ENCODE measurements at regions of chr6 and their contacts with region 1.

Region 1: DNA sequence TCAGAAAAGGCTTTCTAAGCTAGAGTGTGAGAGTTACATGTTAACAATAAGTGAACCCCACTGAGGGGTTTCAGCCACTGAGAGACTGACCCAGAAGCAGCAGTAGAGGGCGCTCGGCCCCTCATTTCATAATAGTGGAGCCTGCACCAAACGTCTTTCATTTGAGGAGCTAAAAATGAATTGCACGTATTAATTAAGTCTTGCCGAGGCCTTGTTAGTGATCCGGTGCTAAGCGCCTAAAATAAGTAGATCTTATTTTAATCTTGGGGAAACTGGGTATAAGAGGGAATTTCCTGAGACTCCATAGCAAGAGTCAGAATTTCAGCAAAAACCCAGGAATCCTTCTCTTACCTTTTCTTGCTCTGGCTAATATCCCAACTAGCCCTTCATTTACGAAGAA is 209.7 kb downstream of the FARS2 start:
- DNase-seq: peak; percentile 87
- H3K4me3 Mint-ChIP-seq: no peak overlapping the region
- H3K27ac Mint-ChIP-seq: no peak overlapping the region
- H3K4me1 Mint-ChIP-seq: peaks cover 5% of the 10 kb centered on the region
- H3K27me3 Mint-ChIP-seq: no peaks in the 10 kb centered on the region

Region 2: GRCh38 chr6:5665173-5665572 is 194.1 kb after region 1 on chr6:
- intact Hi-C with region 1: loop called (anchors 10 kb)
- DNase-seq: peak; percentile 74
- H3K4me3 Mint-ChIP-seq: peak overlapping the region; percentile 58
- H3K27ac Mint-ChIP-seq: peak overlapping the region; percentile 54
- H3K4me1 Mint-ChIP-seq: peaks cover 28% of the 10 kb centered on the region
- H3K27me3 Mint-ChIP-seq: no peaks in the 10 kb centered on the region

Region 3: GRCh38 chr6:5723841-5724691 is 253.0 kb after region 1 on chr6:
- intact Hi-C with region 1: loop called (anchors 1 kb)
- DNase-seq: peak; percentile 62
- H3K4me3 Mint-ChIP-seq: peak overlapping the region; percentile 75
- H3K27ac Mint-ChIP-seq: no peak overlapping the region
- H3K4me1 Mint-ChIP-seq: peaks cover 12% of the 10 kb centered on the region
- H3K27me3 Mint-ChIP-seq: no peaks in the 10 kb centered on the region

Region 4: DNA sequence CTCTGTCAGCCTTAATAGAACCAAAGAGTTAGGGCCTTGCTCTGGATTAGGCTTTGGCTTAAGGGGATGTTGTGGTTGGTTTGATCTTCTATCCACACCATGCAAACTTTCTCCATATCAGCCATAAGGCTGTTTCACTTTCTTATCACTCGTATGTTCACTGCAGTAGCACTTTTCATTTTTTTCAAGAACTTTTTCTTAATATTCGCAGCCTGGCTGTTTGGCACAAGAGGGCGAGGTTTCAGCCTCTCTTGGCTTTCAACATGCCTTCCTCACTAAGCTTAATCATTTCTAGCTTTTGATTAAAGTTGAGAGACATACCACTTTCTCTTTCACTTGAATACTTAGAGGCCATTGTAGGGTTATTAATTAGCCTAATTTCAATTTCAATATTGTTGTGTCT is 342.6 kb after region 1 on chr6:
- intact Hi-C with region 1: loop called (anchors 10 kb)
- DNase-seq: peak; percentile 64
- H3K4me3 Mint-ChIP-seq: peak overlapping the region; percentile 12
- H3K27ac Mint-ChIP-seq: peak overlapping the region; percentile 11
- H3K4me1 Mint-ChIP-seq: peaks cover 13% of the 10 kb centered on the region
- H3K27me3 Mint-ChIP-seq: peaks cover 5% of the 10 kb centered on the region

Region 5: DNA sequence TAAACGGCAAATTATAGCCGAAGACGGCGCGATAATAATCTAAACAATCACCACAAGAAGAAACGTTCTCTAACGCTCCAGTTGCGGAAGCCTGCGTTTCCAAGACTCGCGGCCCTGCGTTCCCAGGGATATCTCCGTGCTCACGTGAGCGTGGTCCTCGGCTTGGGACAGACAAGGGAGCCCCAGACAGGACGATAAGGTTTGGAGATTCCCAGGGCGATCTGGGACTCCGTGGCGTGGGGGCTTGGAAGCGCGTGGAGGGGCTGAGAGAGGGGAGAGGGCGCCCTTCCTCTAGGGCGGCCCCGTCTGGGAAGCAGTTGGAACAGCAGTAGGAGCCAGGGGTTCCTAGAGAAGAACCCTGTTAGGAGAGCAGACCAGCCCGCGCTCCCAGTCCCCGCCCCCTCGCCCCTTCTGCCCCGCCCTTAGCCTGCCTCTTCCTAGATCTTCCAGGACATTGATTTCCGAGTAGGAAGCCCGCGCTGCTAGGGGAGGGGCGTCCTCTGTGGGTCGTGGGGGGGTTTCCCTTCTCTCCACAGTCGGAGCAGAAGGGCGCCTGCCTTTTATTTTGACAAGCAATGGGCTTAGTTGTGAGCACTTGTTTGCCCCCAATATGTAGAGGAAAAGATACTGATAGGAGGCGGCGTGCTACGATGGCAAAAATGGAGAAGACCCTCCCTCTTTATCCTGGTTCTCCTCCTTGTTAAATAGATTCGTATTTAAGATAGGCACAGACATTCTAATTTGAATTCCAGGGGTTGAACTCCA is 525.1 kb after region 1 on chr6:
- intact Hi-C with region 1: loop called (anchors 2 kb)
- DNase-seq: peak; percentile 72
- H3K4me3 Mint-ChIP-seq: peak overlapping the region; percentile 88
- H3K27ac Mint-ChIP-seq: peak overlapping the region; percentile 45
- H3K4me1 Mint-ChIP-seq: peaks cover 45% of the 10 kb centered on the region
- H3K27me3 Mint-ChIP-seq: peaks cover 85% of the 10 kb centered on the region

Region 6: GRCh38 chr6:6131492-6132109 is 660.6 kb after region 1 on chr6:
- intact Hi-C with region 1: loop called (anchors 5 kb)
- DNase-seq: peak; percentile 69
- H3K4me3 Mint-ChIP-seq: no peak overlapping the region
- H3K27ac Mint-ChIP-seq: no peak overlapping the region
- H3K4me1 Mint-ChIP-seq: no peaks in the 10 kb centered on the region
- H3K27me3 Mint-ChIP-seq: no peaks in the 10 kb centered on the region